ENCODE measurements at regions of chr1 and their contacts with region 1.

Region 1: GRCh38 chr1:115138968-115139367 is 49.7 kb upstream of the TSPAN2 start:
- DNase-seq: peak; percentile 81 to 89
- H3K4me3 ChIP-seq: no peak overlapping the region
- H3K27ac ChIP-seq: peak overlapping the region; percentile 18; the same call in 1 of the 2 replicates
- H3K4me1 ChIP-seq: peaks cover 49% of the 10 kb centered on the region
- H3K27me3 ChIP-seq: no peaks in the 10 kb centered on the region
- CTCF ChIP-seq: peak; percentile 98

Region 2: DNA sequence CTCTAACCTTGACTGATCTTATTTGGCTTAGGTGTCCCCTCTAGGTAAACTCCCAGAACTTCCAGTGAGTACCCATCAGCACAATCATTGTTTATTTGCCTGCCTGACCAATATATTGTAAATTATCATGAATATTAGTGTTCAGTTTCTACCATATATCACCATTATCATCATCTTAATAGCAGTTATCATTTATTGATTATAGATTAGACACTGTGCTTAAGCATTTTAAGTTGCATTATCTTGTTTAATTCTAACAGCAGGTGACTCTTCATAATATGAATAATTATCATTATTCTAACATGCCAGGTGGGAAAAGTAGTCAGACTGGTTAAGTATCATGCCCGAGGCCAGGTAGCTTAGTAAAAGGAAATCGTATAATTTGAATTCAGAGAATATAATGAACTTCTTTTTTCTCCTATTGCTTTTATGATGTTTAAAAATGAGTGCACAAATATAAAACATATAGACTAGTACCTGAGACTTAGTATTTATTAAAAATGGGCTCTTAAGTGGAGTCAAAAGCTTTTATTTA is 254.4 kb before region 1 on chr1:
- CTCF ChIA-PET with region 1: no interaction called
- POLR2A ChIA-PET with region 1: no interaction called
- intact Hi-C with region 1: no loop called
- DNase-seq: no peak
- H3K4me3 ChIP-seq: no peak overlapping the region
- H3K27ac ChIP-seq: no peak overlapping the region
- H3K4me1 ChIP-seq: peaks cover 12% of the 10 kb centered on the region; the same call in 1 of the 2 replicates
- H3K27me3 ChIP-seq: no peaks in the 10 kb centered on the region
- CTCF ChIP-seq: no peak

Region 3: GRCh38 chr1:115062542-115063011 is 76.4 kb before region 1 on chr1:
- CTCF ChIA-PET with region 1: no interaction called
- POLR2A ChIA-PET with region 1: no interaction called
- intact Hi-C with region 1: loop called (anchors 1 kb)
- DNase-seq: peak; percentile 98 to 99
- H3K4me3 ChIP-seq: peak overlapping the region; percentile 49
- H3K27ac ChIP-seq: peak overlapping the region; percentile 96
- H3K4me1 ChIP-seq: peaks cover 54% of the 10 kb centered on the region
- H3K27me3 ChIP-seq: no peaks in the 10 kb centered on the region
- CTCF ChIP-seq: 0 out of 2 replicates have a peak, but pooled peaks have one; percentile 26

Region 4: GRCh38 chr1:115173151-115173550 is 34.2 kb after region 1 on chr1:
- CTCF ChIA-PET with region 1: no interaction called
- POLR2A ChIA-PET with region 1: interaction called, 13 read pairs
- intact Hi-C with region 1: no loop called
- DNase-seq: no peak
- H3K4me3 ChIP-seq: no peak overlapping the region
- H3K27ac ChIP-seq: no peak overlapping the region
- H3K4me1 ChIP-seq: peaks cover 34% of the 10 kb centered on the region
- H3K27me3 ChIP-seq: no peaks in the 10 kb centered on the region
- CTCF ChIP-seq: no peak

Region 5: GRCh38 chr1:115275212-115275611 is 136.2 kb after region 1 on chr1:
- CTCF ChIA-PET with region 1: no interaction called
- POLR2A ChIA-PET with region 1: no interaction called
- intact Hi-C with region 1: loop called (anchors 1 kb)
- DNase-seq: no peak
- H3K4me3 ChIP-seq: no peak overlapping the region
- H3K27ac ChIP-seq: no peak overlapping the region
- H3K4me1 ChIP-seq: no peaks in the 10 kb centered on the region
- H3K27me3 ChIP-seq: no peaks in the 10 kb centered on the region
- CTCF ChIP-seq: peak; percentile 74

Region 6: DNA sequence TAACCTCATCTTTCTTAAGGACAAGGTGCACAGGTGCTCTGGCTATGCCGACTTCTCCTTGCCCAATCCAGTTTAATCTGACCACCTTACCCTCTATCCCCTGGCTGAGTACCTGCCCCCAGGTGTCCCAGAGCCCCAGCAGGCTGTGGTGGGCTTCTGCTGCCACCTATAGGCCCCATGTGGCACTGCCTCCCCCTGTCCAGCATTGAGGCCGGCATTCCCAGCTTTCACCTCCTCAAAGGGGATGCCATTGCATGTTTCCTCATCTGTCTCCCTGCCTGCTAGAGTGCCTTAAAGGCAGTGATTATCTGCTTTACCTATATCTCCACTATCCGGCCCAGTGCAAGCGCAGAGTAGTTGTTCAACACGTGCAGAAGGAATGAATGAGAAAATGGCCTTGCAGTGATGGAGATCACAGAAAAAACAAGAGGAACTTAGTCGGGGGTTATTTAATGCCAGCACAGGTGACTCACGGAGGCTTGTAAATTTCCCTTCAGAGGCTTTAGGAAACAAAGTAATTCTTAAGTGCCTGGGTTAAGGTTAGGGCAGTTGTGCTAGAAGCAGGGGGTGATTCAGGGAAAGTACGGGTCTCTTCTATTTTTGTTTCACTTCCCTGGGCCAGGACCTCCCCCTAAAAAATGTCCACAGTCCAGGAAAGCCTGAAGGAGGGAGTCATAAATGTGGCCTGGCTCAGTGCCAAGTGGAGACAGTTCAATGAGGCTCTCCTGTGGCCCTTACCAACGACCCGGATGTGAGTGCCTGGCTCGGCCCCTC is 330.9 kb after region 1 on chr1:
- CTCF ChIA-PET with region 1: interaction called, 6 read pairs
- POLR2A ChIA-PET with region 1: no interaction called
- intact Hi-C with region 1: loop called (anchors 1 kb)
- DNase-seq: peak; percentile 80 to 96
- H3K4me3 ChIP-seq: peak overlapping the region; percentile 10; the same call in 1 of the 2 replicates
- H3K27ac ChIP-seq: peak overlapping the region; percentile 81
- H3K4me1 ChIP-seq: peaks cover 58% of the 10 kb centered on the region
- H3K27me3 ChIP-seq: no peaks in the 10 kb centered on the region
- CTCF ChIP-seq: peak; percentile 100

Region 7: GRCh38 chr1:115595279-115596079 is 456.5 kb after region 1 on chr1:
- CTCF ChIA-PET with region 1: interaction called, 4 read pairs
- POLR2A ChIA-PET with region 1: interaction called, 4 read pairs
- intact Hi-C with region 1: loop called (anchors 1 kb)
- DNase-seq: peak; percentile 87 to 91
- H3K4me3 ChIP-seq: no peak overlapping the region
- H3K27ac ChIP-seq: no peak overlapping the region
- H3K4me1 ChIP-seq: peaks cover 25% of the 10 kb centered on the region
- H3K27me3 ChIP-seq: no peaks in the 10 kb centered on the region
- CTCF ChIP-seq: peak; percentile 99